Left lung (tissue), 14 donors: ENCODE measurements at regions of chr9 and their contacts with region 1.

Region 1: DNA sequence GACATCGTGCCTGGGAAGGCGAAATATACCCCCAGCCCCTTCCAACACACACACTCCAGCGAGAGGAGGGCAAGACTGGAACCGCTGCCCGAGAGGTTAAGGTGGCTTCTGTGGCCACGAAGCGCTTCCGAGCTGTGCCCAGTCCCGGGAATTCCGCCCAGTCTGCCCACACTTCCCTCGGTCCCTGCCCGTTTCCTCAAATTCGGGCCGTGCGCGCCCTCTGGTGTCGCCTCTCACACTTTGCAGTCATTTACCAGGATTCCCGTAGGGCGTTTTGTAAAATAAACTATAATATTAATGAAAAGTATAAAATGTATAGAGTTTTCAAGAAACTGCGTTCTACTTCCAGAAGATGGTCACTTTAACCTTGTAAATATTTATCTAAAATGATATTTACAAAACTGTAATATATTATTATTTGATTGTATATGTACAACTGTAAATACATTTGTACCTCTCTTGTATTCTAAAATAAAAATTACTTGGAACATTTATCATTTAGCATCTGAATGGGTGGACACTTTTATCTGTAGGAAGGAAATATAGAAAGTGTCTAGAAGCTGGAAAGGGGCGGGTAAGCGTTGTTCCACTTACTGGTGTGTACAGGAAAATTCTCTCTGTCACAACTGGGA is 11.0 kb upstream of the EXOSC2 start:
- DNase-seq: peak; percentile 52 to 96 (median 78)
- ATAC-seq: peak; percentile 91
- H3K4me3 ChIP-seq: peak overlapping the region; percentile 29 to 56
- H3K27ac ChIP-seq: no peak overlapping the region
- H3K4me1 ChIP-seq: peaks cover 8 to 10% of the 10 kb centered on the region in 2 donors
- H3K27me3 ChIP-seq: peaks cover 8 to 44% of the 10 kb centered on the region in 2 donors
- CTCF ChIP-seq: peak; percentile 77 to 79

Region 2: GRCh38 chr9:130333041-130333711 is 349.4 kb before region 1 on chr9:
- intact Hi-C with region 1: no loop called
- DNase-seq: peak in 3 of 4 donors; percentile 18 to 61 (median 54)
- ATAC-seq: no peak
- H3K4me3 ChIP-seq: no peak overlapping the region
- H3K27ac ChIP-seq: no peak overlapping the region
- H3K4me1 ChIP-seq: no peaks in the 10 kb centered on the region
- H3K27me3 ChIP-seq: peaks cover 0 to 59% of the 10 kb centered on the region in 2 donors
- CTCF ChIP-seq: no peak

Region 3: DNA sequence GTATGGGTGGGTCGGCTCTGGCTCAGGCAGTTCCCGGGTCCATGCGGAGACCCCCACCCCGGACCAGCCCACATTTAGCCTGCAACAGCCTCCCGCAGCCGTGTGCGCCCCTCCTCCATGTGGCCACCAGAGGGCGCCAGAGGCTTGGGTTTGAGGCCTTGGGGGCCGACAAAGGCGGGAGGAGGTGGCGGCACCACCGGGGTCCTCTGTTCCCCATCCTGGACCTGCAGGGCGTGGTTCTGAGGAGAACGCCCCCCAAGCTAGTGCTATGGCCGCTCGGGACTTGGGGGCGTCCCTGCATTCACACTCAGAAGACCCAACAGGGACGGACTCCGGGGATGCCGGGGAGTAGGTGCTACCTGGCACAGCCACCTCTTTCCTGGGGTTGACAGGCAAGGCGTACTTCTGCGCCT is 221.4 kb before region 1 on chr9:
- intact Hi-C with region 1: loop called (anchors 2 to 10 kb)
- DNase-seq: peak in 3 of 4 donors; percentile 48 to 89 (median 63)
- ATAC-seq: peak; percentile 83
- H3K4me3 ChIP-seq: no peak overlapping the region
- H3K27ac ChIP-seq: no peak overlapping the region
- H3K4me1 ChIP-seq: no peaks in the 10 kb centered on the region
- H3K27me3 ChIP-seq: peaks cover 0 to 5% of the 10 kb centered on the region in 2 donors
- CTCF ChIP-seq: peak; percentile 90